Activated CD8-positive, alpha-beta memory T cell treated with anti-CD3 and anti-CD28 coated beads, Interleukin-2, amount 10 ng/mL, durations not matched to agents 7 days and 5 days (primary cell): ENCODE measurements at regions of chr1 and their contacts with region 1.

Region 1: GRCh38 chr1:184805667-184806295 is 51.1 kb upstream of the EDEM3 start:
- DNase-seq: peak; percentile 88
- ATAC-seq: peak; percentile 98
- H3K4me3 Mint-ChIP-seq: no peak overlapping the region
- H3K27ac Mint-ChIP-seq: no peak overlapping the region
- H3K4me1 Mint-ChIP-seq: peaks cover 5% of the 10 kb centered on the region
- H3K27me3 Mint-ChIP-seq: no peaks in the 10 kb centered on the region

Region 2: DNA sequence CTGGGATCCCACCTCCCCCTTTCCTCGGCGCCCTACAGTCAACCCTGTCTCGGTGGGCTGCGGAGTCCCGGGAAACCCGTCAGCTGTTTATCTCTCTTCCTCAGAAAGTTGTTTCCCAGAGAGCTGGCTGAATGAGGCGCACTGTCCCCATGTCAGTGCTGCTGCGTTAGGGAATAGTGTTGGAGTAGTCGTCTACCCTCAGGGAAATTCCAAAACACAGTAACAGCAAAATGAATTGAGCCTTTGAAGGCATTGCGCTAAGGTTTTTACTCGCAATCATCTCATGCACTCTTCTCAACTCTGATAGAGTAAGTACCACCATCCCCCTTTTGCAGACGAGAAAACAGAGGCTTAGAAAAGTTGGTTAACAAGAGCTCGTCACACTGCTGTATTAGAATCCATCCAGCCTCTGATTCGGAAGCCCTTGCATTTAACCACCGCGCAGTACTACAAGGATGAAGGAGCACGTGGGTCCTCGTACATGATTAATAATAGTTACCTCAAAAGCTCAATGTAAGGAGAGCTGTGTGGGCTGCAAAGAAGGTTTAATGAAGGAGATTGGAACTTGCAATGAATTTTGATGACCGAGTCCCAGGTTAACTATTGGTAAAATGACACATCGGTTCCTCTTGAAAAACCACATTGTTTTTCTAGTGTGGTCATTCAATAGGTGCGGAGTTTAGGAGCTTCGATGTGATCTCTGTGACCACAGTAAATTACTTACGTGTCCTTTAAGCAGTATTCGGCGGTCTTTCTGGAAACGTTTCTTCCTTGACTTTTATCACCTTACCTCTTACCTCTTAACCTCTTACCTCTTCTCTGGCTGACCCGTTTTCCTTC is 50.3 kb before region 1 on chr1:
- CTCF ChIA-PET with region 1: interaction called, 10 read pairs
- DNase-seq: peak; percentile 48
- ATAC-seq: peak; percentile 1
- H3K4me3 Mint-ChIP-seq: peak overlapping the region; percentile 95
- H3K27ac Mint-ChIP-seq: peak overlapping the region; percentile 85
- H3K4me1 Mint-ChIP-seq: peaks cover 30% of the 10 kb centered on the region
- H3K27me3 Mint-ChIP-seq: no peaks in the 10 kb centered on the region

Region 3: DNA sequence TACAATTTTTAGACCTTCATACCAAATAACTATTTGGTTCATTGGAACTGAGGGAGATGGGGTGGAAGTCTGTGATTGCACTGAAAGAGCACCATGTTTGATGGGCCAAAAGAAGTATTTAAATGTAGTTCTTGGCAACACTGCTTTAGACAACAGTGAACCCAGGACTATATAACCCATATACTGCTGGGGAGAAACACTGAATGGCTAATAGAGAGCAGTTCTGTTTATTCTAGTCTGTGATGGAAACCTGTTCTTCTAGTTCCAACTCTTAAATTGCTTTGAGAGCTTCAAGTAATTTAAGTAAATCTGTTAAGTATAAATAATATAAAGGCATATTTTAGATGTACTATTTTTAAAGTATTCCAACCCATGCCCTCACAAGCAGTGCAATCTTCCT is 72.2 kb after region 1 on chr1:
- CTCF ChIA-PET with region 1: interaction called, 12 read pairs
- DNase-seq: no peak
- ATAC-seq: no peak
- H3K4me3 Mint-ChIP-seq: no peak overlapping the region
- H3K27ac Mint-ChIP-seq: no peak overlapping the region
- H3K4me1 Mint-ChIP-seq: peaks cover 15% of the 10 kb centered on the region
- H3K27me3 Mint-ChIP-seq: no peaks in the 10 kb centered on the region

Region 4: DNA sequence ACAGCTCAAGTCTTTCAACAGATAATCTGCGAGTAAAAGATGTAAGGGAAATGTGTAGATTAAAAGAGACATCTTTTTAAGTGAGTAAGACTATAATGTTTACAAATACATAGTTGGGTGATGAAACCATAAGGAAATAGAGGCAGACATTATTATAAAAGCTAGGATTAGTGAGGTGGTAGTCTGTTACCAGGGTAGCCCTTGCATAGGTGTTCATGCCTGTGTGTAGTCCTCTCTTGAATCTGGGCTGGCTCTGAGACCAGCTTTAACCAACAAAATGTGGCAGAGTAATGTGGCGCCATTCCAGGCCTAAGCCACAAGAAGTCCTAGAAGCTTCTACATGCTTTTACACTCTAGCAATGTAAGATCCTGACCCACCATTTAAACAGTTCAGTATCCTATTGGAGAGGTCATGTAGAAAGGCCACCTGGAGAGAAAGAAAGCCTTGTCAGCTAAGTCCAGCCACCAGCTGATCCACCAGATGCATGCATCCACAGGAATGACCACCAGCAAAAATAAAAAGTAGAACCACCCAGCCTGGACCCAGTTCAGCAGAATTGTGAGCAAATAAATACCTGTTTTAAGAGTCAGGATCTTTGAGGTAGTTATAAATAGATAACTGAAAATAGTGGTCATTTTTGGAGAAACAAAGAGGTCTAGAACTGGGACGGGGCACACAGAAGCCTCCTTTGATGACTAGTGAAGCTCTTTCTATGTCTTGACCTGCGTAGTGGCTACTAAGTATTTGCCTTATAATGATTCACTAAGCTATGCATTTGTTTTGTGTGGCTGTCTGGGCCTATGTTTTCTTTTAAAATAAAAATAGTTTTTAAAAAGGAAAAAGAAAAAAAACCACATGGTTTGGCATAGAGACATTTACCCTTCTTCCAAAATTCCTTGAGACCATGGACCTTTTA is 160.4 kb after region 1 on chr1:
- CTCF ChIA-PET with region 1: interaction called, 259 read pairs
- DNase-seq: no peak
- ATAC-seq: no peak
- H3K4me3 Mint-ChIP-seq: no peak overlapping the region
- H3K27ac Mint-ChIP-seq: no peak overlapping the region
- H3K4me1 Mint-ChIP-seq: peaks cover 41% of the 10 kb centered on the region
- H3K27me3 Mint-ChIP-seq: no peaks in the 10 kb centered on the region

Region 5: DNA sequence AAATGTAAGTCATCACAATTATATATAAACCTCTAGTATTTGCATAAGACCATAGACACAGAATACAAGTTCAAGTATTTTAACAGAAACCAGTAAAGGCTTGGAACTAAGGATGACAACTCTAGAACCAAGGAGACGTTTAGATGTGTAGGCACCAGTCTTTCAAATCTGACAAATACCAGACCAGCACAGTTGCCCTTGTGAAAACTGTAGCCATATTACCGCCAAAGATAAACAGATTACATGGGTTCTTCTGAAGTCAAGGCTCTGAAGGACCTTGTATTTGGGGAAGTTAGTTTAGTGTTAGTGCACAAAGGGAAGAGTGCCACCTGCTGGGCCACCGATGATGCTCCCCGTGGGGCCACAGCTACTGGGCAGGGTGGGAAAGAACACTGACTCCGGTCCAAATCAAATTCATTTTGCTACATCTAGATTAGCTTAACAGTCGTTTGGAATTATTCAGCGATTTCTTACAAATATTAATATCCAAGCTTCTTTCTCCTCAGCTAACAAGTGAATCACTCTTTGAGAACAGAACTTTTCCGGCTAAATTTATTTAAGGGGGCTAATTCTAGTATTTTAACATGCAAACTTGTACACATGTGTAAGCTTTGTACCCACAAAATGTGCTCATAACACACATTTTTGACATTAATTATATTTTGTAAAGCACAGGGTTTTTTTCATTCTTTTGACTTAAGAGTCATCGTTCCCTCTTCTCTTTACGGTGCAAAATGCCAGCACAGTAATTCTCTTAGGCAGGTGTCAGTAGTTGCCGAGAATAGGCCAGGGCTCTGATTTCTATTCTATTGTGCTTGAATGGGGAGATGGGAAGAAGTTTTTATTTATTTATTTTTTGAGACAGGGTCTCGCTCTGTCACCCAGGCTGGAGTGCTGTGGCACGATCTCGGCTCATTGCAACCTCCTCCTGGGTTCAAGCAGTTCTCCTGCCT is 176.5 kb after region 1 on chr1:
- CTCF ChIA-PET with region 1: interaction called, 259 read pairs
- DNase-seq: peak; percentile 85
- ATAC-seq: peak; percentile 99
- H3K4me3 Mint-ChIP-seq: no peak overlapping the region
- H3K27ac Mint-ChIP-seq: no peak overlapping the region
- H3K4me1 Mint-ChIP-seq: peaks cover 7% of the 10 kb centered on the region
- H3K27me3 Mint-ChIP-seq: peaks cover 15% of the 10 kb centered on the region